ENCODE measurements at regions of chr15 and their contacts with region 1.

Region 1: DNA sequence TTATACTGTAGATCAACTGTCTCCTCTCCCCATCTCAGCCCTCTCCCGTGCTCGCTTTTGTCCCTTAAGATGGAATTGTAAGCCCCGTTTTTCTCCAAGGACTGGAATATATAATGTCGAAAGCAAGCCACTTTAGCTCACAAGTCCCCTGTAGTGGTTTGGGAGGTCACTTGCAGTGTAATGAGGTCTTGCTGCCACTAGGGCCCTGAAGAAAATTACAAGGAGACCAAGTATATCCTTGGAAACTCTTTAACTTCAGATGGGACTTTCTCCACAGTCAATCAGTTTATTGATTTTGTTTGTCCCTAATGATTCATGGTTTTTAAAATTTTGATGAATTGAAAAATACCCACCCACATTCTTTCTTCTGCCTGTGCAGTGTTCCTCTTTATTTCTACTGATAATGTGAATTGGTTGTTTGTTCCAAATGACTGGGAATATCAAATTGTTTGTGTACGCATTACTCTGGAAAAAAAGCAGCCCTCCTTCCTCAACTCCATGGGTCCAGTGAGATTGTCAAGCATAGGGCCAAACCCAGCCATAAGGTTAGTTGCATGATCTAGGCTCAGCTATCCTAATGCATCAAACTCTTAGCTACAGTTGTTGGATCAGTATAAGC is 294.8 kb downstream of the MCTP2 start:
- DNase-seq: peak; percentile 19
- ATAC-seq: peak; percentile 88
- H3K4me3 ChIP-seq: no peak overlapping the region
- H3K27ac ChIP-seq: no peak overlapping the region
- H3K4me1 ChIP-seq: peaks cover 0 to 16% of the 10 kb centered on the region in 2 experiments; a peak in 2 of 4 replicates
- H3K27me3 ChIP-seq: no peaks in the 10 kb centered on the region
- CTCF ChIP-seq: peak; percentile 14 to 75 (median 67); a peak in 4 of 6 replicates
- POLR2A ChIP-seq: no peak
- RAD21 ChIP-seq: no peak

Region 2: GRCh38 chr15:96421178-96421601 is 1895.0 kb after region 1 on chr15:
- CTCF ChIA-PET with region 1: no interaction called
- POLR2A ChIA-PET with region 1: no interaction called
- RAD21 ChIA-PET with region 1: no interaction called
- intact Hi-C with region 1: loop called (anchors 5 kb)
- DNase-seq: no peak
- ATAC-seq: no peak
- H3K4me3 ChIP-seq: no peak overlapping the region
- H3K27ac ChIP-seq: no peak overlapping the region
- H3K4me1 ChIP-seq: no peaks in the 10 kb centered on the region
- H3K27me3 ChIP-seq: peaks cover 88% of the 10 kb centered on the region
- CTCF ChIP-seq: no peak
- POLR2A ChIP-seq: no peak
- RAD21 ChIP-seq: no peak

Measured in HCT116 (cell line).